Heart left ventricle (tissue), 16 donors: ENCODE measurements at regions of chr10 and their contacts with region 1.

Region 1: GRCh38 chr10:90718182-90718581 is 139.7 kb downstream of the HTR7 start:
- DNase-seq: no peak
- ATAC-seq: no peak
- H3K4me3 ChIP-seq: no peak overlapping the region
- H3K27ac ChIP-seq: no peak overlapping the region
- H3K4me1 ChIP-seq: no peaks in the 10 kb centered on the region
- H3K27me3 ChIP-seq: peaks cover 0 to 5% (median 0%) of the 10 kb centered on the region in 9 donors
- CTCF ChIP-seq: peak in 4 of 12 donors; percentile 5 to 41 (median 24)
- POLR2A ChIP-seq: no peak

Region 2: GRCh38 chr10:90288391-90288933 is 429.7 kb before region 1 on chr10:
- intact Hi-C with region 1: loop called in 1 of 10 experiments (anchors 10 kb)
- DNase-seq: no peak
- ATAC-seq: peak in 3 of 4 donors; percentile 15 to 68 (median 18)
- H3K4me3 ChIP-seq: no peak overlapping the region
- H3K27ac ChIP-seq: peak overlapping the region in 1 of 12 donors; percentile 3
- H3K4me1 ChIP-seq: peaks cover 0 to 11% (median 0%) of the 10 kb centered on the region in 12 donors
- H3K27me3 ChIP-seq: no peaks in the 10 kb centered on the region
- CTCF ChIP-seq: peak in 4 of 12 donors; percentile 23 to 44 (median 32)
- POLR2A ChIP-seq: no peak